Activated naive CD4-positive, alpha-beta T cell treated with anti-CD3 and anti-CD28 coated beads for 36 hours (primary cell): ENCODE measurements at regions of chr1 and their contacts with region 1.

Region 1: DNA sequence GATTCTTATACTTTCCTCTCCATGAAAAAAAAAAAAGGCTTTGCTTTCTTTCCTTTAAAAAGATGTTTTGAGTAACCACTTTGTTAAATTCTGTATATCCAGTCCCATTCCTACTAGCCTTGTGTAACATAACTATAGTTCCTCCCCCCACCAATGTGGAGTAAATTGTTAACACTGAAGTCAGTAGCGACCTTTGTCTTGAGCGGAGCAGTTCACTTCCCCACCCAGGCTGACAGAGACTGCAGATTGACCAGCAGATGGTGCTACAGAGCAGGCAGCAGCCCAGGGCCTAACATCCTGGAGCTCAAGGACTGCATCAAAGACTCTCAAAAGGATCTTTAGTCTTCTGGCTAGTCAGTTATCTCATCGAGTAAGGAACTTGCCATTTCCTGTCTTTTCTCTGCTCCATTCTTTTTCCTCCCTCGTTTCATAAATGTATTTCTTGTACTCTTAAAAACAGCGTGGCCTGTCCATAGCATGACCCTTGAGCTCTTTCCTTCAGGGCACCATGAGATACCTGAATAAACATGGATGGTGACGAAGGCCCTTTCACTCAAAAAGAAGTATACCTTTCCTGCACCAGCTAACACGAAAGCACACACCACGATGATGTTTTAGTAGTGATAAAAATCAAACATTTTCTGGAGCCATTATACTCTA is 503.5 kb upstream of the PKN2 start:
- DNase-seq: peak; percentile 79
- H3K4me3 Mint-ChIP-seq: no peak overlapping the region
- H3K27ac Mint-ChIP-seq: no peak overlapping the region
- H3K4me1 Mint-ChIP-seq: peaks cover 2% of the 10 kb centered on the region
- H3K27me3 Mint-ChIP-seq: peaks cover 2% of the 10 kb centered on the region

Region 2: DNA sequence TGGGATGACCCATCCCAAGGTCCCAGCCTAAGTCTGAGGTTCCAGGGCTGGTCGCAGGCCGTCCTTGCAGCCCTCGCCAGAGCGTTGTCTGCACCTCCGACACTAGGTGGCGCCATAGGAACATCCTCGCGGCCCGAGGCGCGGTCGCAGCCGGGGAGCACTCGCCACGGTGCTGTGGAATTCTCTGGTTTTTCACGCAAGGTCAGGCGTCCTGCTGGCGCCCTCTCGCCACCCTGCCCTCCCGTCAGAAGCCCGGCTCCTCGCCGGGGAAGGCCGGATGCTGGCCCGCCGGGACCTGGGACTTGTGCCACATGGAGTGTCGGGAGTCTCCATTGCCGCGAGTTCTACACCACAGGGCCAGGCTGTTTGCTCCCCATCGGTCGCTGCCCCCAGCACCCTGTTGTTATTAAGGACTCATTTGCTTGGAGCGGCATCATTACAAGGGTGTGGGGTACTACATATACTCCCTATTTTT is 1048.7 kb before region 1 on chr1:
- CTCF ChIA-PET with region 1: no interaction called
- intact Hi-C with region 1: loop called (anchors 5 kb)
- DNase-seq: peak; percentile 81
- H3K4me3 Mint-ChIP-seq: peak overlapping the region; percentile 69
- H3K27ac Mint-ChIP-seq: no peak overlapping the region
- H3K4me1 Mint-ChIP-seq: peaks cover 7% of the 10 kb centered on the region
- H3K27me3 Mint-ChIP-seq: peaks cover 40% of the 10 kb centered on the region

Region 3: DNA sequence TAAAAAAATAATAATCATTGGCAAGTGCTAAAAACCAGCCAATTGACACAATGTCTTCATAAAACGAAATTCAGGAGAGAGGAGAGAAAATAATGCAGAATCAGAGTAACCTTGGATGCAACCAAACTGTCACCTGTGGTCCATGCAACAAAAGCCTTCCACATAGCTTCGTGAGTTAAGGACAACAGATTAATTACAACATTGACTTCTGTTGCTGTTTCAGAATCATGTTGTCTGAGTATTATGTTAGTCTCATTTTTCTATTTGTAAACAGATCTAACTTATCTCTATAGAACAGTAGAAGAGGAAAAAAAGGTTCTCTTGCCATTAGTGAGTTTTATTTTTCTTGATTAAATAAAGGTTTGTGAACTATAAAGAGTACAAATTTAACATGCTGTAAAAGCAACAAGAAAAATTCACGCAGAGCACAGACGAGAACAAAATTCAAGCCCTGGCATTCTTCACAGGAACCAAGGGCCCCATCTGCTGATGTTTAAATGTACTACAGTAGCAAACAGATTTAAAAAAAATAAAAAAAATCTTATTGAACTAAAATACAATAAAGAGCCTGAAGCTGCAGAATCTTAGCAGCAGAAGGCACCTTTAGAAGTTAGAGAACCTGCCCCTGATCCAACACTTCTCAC is 122.4 kb after region 1 on chr1:
- CTCF ChIA-PET with region 1: interaction called, 3 read pairs
- intact Hi-C with region 1: loop called (anchors 1 kb)
- DNase-seq: no peak
- H3K4me3 Mint-ChIP-seq: no peak overlapping the region
- H3K27ac Mint-ChIP-seq: no peak overlapping the region
- H3K4me1 Mint-ChIP-seq: no peaks in the 10 kb centered on the region
- H3K27me3 Mint-ChIP-seq: no peaks in the 10 kb centered on the region

Region 4: DNA sequence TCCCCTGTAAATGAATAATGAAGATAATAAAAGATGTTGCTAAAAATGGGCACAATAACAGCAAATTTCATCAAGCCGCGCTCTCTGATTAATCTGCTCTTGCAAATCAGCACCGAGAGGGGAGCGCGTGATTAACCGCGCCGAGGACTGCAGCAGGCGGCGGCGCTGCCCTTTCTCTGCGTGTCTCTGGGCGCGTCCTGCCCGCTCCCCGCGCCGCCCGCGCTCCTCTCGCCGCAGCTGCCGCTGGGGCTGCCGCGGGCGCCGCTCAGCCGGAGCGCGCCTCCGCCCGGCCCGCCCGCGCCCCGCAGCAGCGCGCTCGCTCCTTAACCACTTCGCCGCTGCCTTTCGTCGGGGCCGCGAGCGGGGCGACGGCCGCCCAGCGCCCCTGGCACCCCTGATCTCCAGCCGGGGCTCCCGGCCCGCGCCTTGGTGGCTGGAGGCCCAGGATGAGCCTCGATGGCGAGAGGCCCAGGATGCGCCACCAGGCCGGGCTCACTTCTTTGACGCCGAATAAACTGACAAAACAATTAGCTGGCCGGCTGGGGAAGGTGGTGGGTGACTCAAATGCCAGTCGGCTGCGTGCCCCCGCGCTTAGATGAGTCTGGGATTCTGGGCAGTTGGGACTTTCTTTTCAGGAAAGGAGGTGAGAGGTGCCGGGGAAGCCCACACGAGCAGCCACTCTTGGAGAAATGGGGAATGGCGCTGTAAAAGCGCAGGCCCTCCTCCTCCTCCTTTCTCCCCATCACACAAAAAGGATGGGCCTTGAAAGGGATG is 282.1 kb after region 1 on chr1:
- CTCF ChIA-PET with region 1: interaction called, 3 read pairs
- intact Hi-C with region 1: loop called (anchors 10 kb)
- DNase-seq: no peak
- H3K4me3 Mint-ChIP-seq: no peak overlapping the region
- H3K27ac Mint-ChIP-seq: no peak overlapping the region
- H3K4me1 Mint-ChIP-seq: no peaks in the 10 kb centered on the region
- H3K27me3 Mint-ChIP-seq: peaks cover 25% of the 10 kb centered on the region

Region 5: DNA sequence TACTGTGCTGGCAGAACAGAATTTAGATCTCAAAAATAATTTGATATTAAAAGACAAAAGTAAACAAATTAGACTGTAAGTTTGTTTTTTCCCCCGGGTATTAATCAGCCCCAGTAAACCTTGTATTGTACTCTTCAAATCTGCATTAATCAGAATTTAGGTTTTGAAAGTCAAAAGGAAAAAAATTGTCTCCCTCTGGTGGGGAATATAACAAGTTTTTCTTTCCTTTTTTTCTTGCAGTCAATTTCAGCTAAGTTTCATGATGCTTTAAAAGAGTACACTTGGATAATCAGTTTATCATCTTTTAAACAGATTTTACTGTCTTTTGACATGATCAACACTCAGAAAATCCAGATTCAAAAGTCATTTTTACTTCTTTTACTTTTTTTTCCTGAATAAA is 369.0 kb after region 1 on chr1:
- CTCF ChIA-PET with region 1: no interaction called
- intact Hi-C with region 1: loop called (anchors 1 kb)
- DNase-seq: no peak
- H3K4me3 Mint-ChIP-seq: no peak overlapping the region
- H3K27ac Mint-ChIP-seq: no peak overlapping the region
- H3K4me1 Mint-ChIP-seq: no peaks in the 10 kb centered on the region
- H3K27me3 Mint-ChIP-seq: no peaks in the 10 kb centered on the region

Region 6: DNA sequence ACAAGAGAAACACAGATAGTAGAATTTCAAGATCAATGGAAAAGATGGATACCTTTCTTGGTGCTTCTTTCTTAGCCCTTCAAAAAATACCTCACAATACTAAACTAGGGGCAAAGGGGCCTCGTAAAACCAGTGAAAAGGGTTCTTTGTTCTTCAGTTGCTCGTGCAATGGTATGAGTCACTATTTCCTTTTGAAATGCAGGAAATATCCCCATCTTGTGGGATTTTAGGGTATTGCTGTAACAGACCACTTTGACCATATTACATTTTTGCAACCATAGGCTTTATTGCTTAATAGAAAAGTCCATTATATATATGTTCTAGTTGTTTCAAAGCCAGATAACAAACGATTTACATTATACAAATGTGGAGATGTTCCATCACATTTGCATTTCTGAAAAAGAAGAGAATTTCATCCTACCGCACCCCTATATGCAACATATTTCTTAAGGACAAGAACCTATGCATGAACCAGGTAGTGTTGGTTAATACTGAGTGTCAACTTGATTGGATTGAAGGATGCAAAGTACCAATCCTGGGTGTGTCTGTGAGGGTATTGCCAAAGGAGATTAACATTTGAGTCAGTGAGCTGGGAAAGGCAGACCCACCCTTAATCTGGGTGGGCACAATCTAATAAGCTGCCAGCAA is 414.9 kb after region 1 on chr1:
- CTCF ChIA-PET with region 1: interaction called, 5 read pairs
- intact Hi-C with region 1: loop called (anchors 1 kb)
- DNase-seq: no peak
- H3K4me3 Mint-ChIP-seq: no peak overlapping the region
- H3K27ac Mint-ChIP-seq: no peak overlapping the region
- H3K4me1 Mint-ChIP-seq: peaks cover 4% of the 10 kb centered on the region
- H3K27me3 Mint-ChIP-seq: peaks cover 3% of the 10 kb centered on the region

Region 7: DNA sequence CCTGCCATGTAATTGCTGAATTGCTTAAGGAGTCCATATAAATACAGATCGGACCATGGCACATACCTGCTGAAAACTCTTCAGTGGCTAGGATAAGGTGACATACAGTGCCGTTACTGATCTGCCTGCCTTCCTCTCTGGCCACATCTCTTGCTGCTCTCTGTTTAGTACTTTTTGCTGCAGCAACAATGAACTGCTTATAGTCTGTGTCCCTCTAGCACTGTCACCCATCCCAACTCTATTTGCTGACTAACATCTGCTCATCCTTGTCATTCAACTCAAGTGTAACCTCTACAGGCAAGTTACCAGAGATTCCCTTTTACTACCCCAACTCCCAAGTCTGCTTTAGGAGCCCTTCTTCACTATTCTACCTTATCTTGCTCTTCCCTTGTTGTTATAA is 645.1 kb after region 1 on chr1:
- CTCF ChIA-PET with region 1: no interaction called
- intact Hi-C with region 1: no loop called
- DNase-seq: no peak
- H3K4me3 Mint-ChIP-seq: no peak overlapping the region
- H3K27ac Mint-ChIP-seq: no peak overlapping the region
- H3K4me1 Mint-ChIP-seq: no peaks in the 10 kb centered on the region
- H3K27me3 Mint-ChIP-seq: no peaks in the 10 kb centered on the region